ENCODE measurements at regions of chr21 and their contacts with region 1.

Region 1: GRCh38 chr21:31604591-31605190 is 54.8 kb upstream of the SOD1 start:
- DNase-seq: peak; percentile 68 to 84 (median 76)
- ATAC-seq: peak; percentile 91
- H3K4me3 ChIP-seq: no peak overlapping the region
- H3K27ac ChIP-seq: no peak overlapping the region
- H3K4me1 ChIP-seq: no peaks in the 10 kb centered on the region
- H3K27me3 ChIP-seq: peaks cover 5 to 12% of the 10 kb centered on the region in 2 experiments; a peak in 3 of 5 replicates
- CTCF ChIP-seq: peak; percentile 77 to 91 (median 86)
- EP300 ChIP-seq: no peak
- POLR2A ChIP-seq: no peak
- RAD21 ChIP-seq: peak; percentile 73 to 93

Region 2: GRCh38 chr21:30831194-30831765 is 773.4 kb before region 1 on chr21:
- CTCF ChIA-PET with region 1: no interaction called
- POLR2A ChIA-PET with region 1: no interaction called
- in situ Hi-C with region 1: no loop called
- intact Hi-C with region 1: loop called (anchors 10 kb)
- DNase-seq: peak; percentile 35 to 62 (median 56)
- ATAC-seq: 0 out of 3 replicates have a peak, but pooled peaks have one; percentile 47
- H3K4me3 ChIP-seq: no peak overlapping the region
- H3K27ac ChIP-seq: no peak overlapping the region
- H3K4me1 ChIP-seq: no peaks in the 10 kb centered on the region
- H3K27me3 ChIP-seq: no peaks in the 10 kb centered on the region
- CTCF ChIP-seq: peak; percentile 41 to 71 (median 62)
- EP300 ChIP-seq: no peak
- POLR2A ChIP-seq: no peak
- RAD21 ChIP-seq: peak; percentile 26 to 60; a peak in 3 of 4 replicates

Region 3: GRCh38 chr21:31098576-31099005 is 506.1 kb before region 1 on chr21:
- CTCF ChIA-PET with region 1: interaction called, 5 read pairs
- POLR2A ChIA-PET with region 1: no interaction called
- in situ Hi-C with region 1: no loop called
- intact Hi-C with region 1: loop called (anchors 1 kb)
- DNase-seq: peak; percentile 54 to 71 (median 60)
- ATAC-seq: peak; percentile 96
- H3K4me3 ChIP-seq: no peak overlapping the region
- H3K27ac ChIP-seq: no peak overlapping the region
- H3K4me1 ChIP-seq: no peaks in the 10 kb centered on the region
- H3K27me3 ChIP-seq: no peaks in the 10 kb centered on the region
- CTCF ChIP-seq: peak; percentile 82 to 92 (median 88)
- EP300 ChIP-seq: no peak
- POLR2A ChIP-seq: no peak
- RAD21 ChIP-seq: peak; percentile 58 to 82

Region 4: GRCh38 chr21:31198575-31198974 is 406.1 kb before region 1 on chr21:
- CTCF ChIA-PET with region 1: interaction called, 18 read pairs
- POLR2A ChIA-PET with region 1: interaction called, 4 read pairs
- in situ Hi-C with region 1: loop called (anchors 5 kb)
- intact Hi-C with region 1: loop called (anchors 1 kb)
- DNase-seq: peak; percentile 43 to 63 (median 49)
- ATAC-seq: peak; percentile 84
- H3K4me3 ChIP-seq: no peak overlapping the region
- H3K27ac ChIP-seq: no peak overlapping the region
- H3K4me1 ChIP-seq: no peaks in the 10 kb centered on the region
- H3K27me3 ChIP-seq: peaks cover 5% of the 10 kb centered on the region in 2 experiments; a peak in 3 of 5 replicates
- CTCF ChIP-seq: peak in 2 of 3 experiments; percentile 60 to 85; a peak in 4 of 6 replicates
- EP300 ChIP-seq: no peak
- POLR2A ChIP-seq: no peak
- RAD21 ChIP-seq: peak; percentile 73 to 90

Region 5: GRCh38 chr21:31537872-31538576 is 66.7 kb before region 1 on chr21:
- CTCF ChIA-PET with region 1: no interaction called
- POLR2A ChIA-PET with region 1: no interaction called
- in situ Hi-C with region 1: no loop called
- intact Hi-C with region 1: loop called (anchors 5 kb)
- DNase-seq: peak in 2 of 4 experiments; percentile 29 to 33
- ATAC-seq: peak; percentile 65
- H3K4me3 ChIP-seq: no peak overlapping the region
- H3K27ac ChIP-seq: no peak overlapping the region
- H3K4me1 ChIP-seq: no peaks in the 10 kb centered on the region
- H3K27me3 ChIP-seq: peaks cover 20 to 31% of the 10 kb centered on the region in 2 experiments; a peak in 4 of 5 replicates
- CTCF ChIP-seq: peak; percentile 33 to 46 (median 41); a peak in 3 of 6 replicates
- EP300 ChIP-seq: no peak
- POLR2A ChIP-seq: no peak
- RAD21 ChIP-seq: no peak

Measured in K562 (cell line).